HEK293 (cell line): ENCODE measurements at regions of chr13 and their contacts with region 1.

Region 1: DNA sequence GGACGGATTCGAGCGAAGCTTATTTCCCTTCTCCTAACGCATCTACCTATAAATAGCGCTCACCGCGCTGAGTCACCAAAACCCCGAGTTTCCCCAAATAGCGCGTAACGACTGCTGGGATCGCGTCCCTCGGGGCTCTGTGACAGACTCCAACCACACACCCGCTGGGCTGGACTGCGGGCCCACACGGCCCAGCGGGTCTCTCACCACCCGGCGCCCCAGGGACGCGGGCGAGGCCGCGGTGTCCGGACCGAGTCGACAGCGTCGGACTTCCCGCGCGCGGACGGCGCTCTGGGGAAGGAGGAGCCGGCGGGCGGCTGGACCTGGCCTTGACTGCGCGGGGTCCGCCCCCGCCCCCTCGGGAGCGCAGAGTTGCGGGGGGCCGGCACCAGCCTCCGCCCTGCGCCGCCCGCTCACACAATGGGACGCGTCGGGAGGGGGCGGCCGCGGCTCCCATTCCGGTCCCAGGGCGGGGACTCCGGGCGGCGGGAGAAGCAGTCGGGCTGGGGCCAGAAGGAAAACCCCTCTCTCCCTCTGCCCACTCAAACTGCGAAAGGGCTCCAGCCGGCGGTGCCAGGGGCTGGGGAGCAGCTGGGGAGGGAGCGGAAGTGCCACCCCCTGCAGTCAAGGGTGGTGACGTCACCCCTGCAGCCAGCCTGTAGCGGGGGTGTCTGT is 108.8 kb downstream of the KCNRG start:
- H3K4me3 ChIP-seq: peak overlapping the region; percentile 63
- H3K27ac ChIP-seq: peak overlapping the region; percentile 99
- H3K4me1 ChIP-seq: peaks cover 6% of the 10 kb centered on the region
- CTCF ChIP-seq: no peak

Region 2: GRCh38 chr13:50026788-50027473 is 97.1 kb before region 1 on chr13:
- CTCF ChIA-PET with region 1: no interaction called
- POLR2A ChIA-PET with region 1: no interaction called
- H3K4me3 ChIP-seq: no peak overlapping the region
- H3K27ac ChIP-seq: no peak overlapping the region
- H3K4me1 ChIP-seq: no peaks in the 10 kb centered on the region
- CTCF ChIP-seq: no peak

Region 3: DNA sequence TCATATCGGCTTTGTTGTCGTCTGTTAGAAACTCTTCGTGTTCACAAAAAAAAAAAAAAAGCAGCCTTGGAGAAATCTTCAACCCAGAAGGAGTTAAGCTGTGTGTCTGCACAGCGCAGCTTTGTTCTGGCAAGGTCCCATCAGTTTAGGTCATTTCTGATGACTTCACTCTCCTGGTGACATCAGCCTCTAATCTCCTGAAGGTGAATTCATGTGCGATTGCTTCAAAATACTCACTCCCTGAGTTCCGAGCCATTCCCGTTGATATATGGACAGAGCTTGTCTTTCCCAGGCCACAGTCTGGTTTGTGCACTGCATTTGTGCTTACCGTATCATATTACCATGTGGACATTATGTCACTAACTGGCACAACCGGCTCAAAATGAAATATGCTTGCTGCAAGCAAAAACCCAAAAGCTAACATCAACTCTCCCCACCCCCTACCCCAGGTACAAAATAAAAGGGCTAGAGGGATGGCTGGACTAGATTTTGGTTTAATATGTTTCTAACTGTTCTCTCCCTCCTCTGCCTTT is 233.7 kb after region 1 on chr13:
- CTCF ChIA-PET with region 1: no interaction called
- POLR2A ChIA-PET with region 1: interaction called, 17 read pairs
- H3K4me3 ChIP-seq: no peak overlapping the region
- H3K27ac ChIP-seq: peak overlapping the region; percentile 67
- H3K4me1 ChIP-seq: peaks cover 8% of the 10 kb centered on the region
- CTCF ChIP-seq: no peak

Region 4: GRCh38 chr13:50421473-50422130 is 297.6 kb after region 1 on chr13:
- CTCF ChIA-PET with region 1: no interaction called
- POLR2A ChIA-PET with region 1: no interaction called
- H3K4me3 ChIP-seq: no peak overlapping the region
- H3K27ac ChIP-seq: no peak overlapping the region
- H3K4me1 ChIP-seq: no peaks in the 10 kb centered on the region; the same call in 1 of the 2 replicates
- CTCF ChIP-seq: no peak